ENCODE measurements at regions of chr7 and their contacts with region 1.

Region 1: GRCh38 chr7:21253740-21254687 is 173.9 kb upstream of the SP4 start:
- DNase-seq: peak; percentile 56
- ATAC-seq: peak; percentile 41
- H3K4me3 ChIP-seq: no peak overlapping the region
- H3K4me3 Mint-ChIP-seq: peak overlapping the region; percentile 9
- H3K27ac ChIP-seq: no peak overlapping the region
- H3K27ac Mint-ChIP-seq: no peak overlapping the region
- H3K4me1 ChIP-seq: no peaks in the 10 kb centered on the region
- H3K4me1 Mint-ChIP-seq: peaks cover 5% of the 10 kb centered on the region
- H3K27me3 ChIP-seq: peaks cover 0 to 31% (median 18%) of the 10 kb centered on the region in 4 experiments
- H3K27me3 Mint-ChIP-seq: peaks cover 39% of the 10 kb centered on the region
- CTCF ChIP-seq: peak; percentile 62

Region 2: DNA sequence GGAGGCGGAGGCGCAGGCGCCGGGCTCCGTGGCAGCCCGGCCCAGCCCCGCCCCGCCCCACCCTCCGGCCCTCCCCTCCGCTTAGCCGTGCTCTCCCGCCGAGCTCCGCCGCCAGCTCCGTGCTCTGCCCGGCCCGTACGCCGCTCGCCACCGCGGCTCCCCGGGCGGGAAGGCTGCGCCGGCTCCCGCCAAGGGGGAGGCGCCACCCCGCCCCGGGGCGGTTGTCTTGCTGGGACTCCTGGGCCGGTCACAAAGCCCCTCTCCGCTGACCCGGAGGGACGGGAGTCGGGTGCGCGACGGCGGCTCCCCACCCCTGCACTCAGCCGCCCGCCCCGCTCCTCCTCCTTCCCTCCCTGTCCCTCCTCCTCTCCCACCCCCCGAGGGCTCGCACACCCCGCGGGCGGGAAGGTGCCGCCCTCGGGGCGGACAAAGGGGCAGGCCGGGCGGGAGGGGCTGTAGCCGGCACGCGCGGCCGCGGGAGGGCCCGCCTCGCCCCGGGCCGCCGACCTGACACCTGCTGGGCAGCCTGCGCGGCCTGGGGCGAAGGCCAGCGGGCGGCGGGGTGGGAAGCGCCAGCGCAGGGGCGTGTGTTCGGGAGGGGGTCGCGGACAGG is 455.8 kb before region 1 on chr7:
- CTCF ChIA-PET with region 1: no interaction called
- POLR2A ChIA-PET with region 1: no interaction called
- intact Hi-C with region 1: loop called (anchors 10 kb)
- DNase-seq: no peak
- ATAC-seq: peak; percentile 80
- H3K4me3 ChIP-seq: peak overlapping the region in 4 of 5 experiments; percentile 21 to 72 (median 54)
- H3K4me3 Mint-ChIP-seq: peak overlapping the region; percentile 76
- H3K27ac ChIP-seq: no peak overlapping the region
- H3K27ac Mint-ChIP-seq: no peak overlapping the region
- H3K4me1 ChIP-seq: peaks cover 15 to 23% of the 10 kb centered on the region in 2 donors
- H3K4me1 Mint-ChIP-seq: peaks cover 19% of the 10 kb centered on the region
- H3K27me3 ChIP-seq: peaks cover under 1 to 58% (median 54%) of the 10 kb centered on the region in 4 experiments
- H3K27me3 Mint-ChIP-seq: peaks cover 54% of the 10 kb centered on the region
- CTCF ChIP-seq: no peak

Region 3: GRCh38 chr7:21507626-21508343 is 253.8 kb after region 1 on chr7:
- CTCF ChIA-PET with region 1: interaction called, 25 read pairs
- POLR2A ChIA-PET with region 1: no interaction called
- intact Hi-C with region 1: loop called (anchors 1 kb)
- DNase-seq: peak; percentile 43
- ATAC-seq: no peak
- H3K4me3 ChIP-seq: no peak overlapping the region
- H3K4me3 Mint-ChIP-seq: no peak overlapping the region
- H3K27ac ChIP-seq: no peak overlapping the region
- H3K27ac Mint-ChIP-seq: peak overlapping the region; percentile 29
- H3K4me1 ChIP-seq: no peaks in the 10 kb centered on the region
- H3K4me1 Mint-ChIP-seq: peaks cover 2% of the 10 kb centered on the region
- H3K27me3 ChIP-seq: no peaks in the 10 kb centered on the region
- H3K27me3 Mint-ChIP-seq: no peaks in the 10 kb centered on the region
- CTCF ChIP-seq: peak; percentile 66

Region 4: DNA sequence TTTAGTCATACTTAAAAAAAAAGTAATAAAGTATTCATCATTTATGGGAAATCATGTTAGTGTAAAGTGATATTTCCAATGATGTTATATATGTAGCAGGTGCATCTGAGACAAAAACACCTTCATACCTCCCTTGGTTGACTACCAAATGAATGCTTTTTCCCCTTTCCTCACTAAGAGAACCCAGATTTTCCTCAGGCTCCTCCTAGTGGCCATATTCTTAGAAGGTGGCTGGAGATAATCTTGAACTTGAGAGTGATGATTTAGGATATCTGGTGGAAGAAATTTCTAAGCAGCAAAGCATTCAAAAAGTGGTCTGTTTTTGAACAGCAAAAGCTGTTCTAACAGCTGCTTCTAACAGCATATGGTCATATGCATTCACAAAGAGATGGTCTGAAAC is 272.0 kb after region 1 on chr7:
- CTCF ChIA-PET with region 1: interaction called, 9 read pairs
- POLR2A ChIA-PET with region 1: no interaction called
- intact Hi-C with region 1: loop called (anchors 5 kb)
- DNase-seq: peak; percentile 11
- ATAC-seq: no peak
- H3K4me3 ChIP-seq: no peak overlapping the region
- H3K4me3 Mint-ChIP-seq: no peak overlapping the region
- H3K27ac ChIP-seq: no peak overlapping the region
- H3K27ac Mint-ChIP-seq: no peak overlapping the region
- H3K4me1 ChIP-seq: no peaks in the 10 kb centered on the region
- H3K4me1 Mint-ChIP-seq: no peaks in the 10 kb centered on the region
- H3K27me3 ChIP-seq: no peaks in the 10 kb centered on the region
- H3K27me3 Mint-ChIP-seq: no peaks in the 10 kb centered on the region
- CTCF ChIP-seq: peak; percentile 38

Region 5: GRCh38 chr7:21568762-21569161 is 314.7 kb after region 1 on chr7:
- CTCF ChIA-PET with region 1: interaction called, 10 read pairs
- POLR2A ChIA-PET with region 1: no interaction called
- intact Hi-C with region 1: no loop called
- DNase-seq: peak; percentile 18
- ATAC-seq: no peak
- H3K4me3 ChIP-seq: no peak overlapping the region
- H3K4me3 Mint-ChIP-seq: no peak overlapping the region
- H3K27ac ChIP-seq: no peak overlapping the region
- H3K27ac Mint-ChIP-seq: no peak overlapping the region
- H3K4me1 ChIP-seq: no peaks in the 10 kb centered on the region
- H3K4me1 Mint-ChIP-seq: no peaks in the 10 kb centered on the region
- H3K27me3 ChIP-seq: no peaks in the 10 kb centered on the region
- H3K27me3 Mint-ChIP-seq: peaks cover 19% of the 10 kb centered on the region
- CTCF ChIP-seq: peak; percentile 21

Region 6: DNA sequence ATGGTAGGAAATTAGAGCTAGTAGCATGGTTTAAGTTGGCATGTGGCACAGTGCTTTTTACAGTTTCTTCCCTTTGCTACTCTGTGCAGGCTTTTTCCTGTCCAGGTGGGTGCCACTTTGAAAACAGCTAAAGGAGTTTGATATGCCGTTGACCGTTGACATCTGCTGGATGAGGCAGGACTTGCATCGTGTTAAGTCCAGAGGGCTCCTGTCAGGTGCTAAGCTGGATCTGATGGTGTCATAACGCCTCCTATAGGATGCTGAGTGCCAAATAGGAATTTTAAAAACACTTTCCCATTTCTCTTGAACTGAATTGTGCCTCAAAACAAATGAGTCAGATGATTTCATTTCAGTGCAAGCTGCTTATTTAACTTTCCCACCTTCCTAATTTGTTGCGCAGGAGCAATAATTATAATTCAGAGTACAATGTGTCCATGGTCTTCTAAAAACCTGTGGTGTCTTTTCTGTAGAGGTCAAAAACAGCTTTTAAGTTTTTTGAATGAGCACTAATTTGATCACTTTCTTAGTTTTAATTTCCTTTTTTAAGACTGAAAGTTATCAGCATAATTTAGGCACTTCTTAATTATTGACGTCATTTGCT is 513.4 kb after region 1 on chr7:
- CTCF ChIA-PET with region 1: interaction called, 11 read pairs
- POLR2A ChIA-PET with region 1: no interaction called
- intact Hi-C with region 1: no loop called
- DNase-seq: peak; percentile 29
- ATAC-seq: peak; percentile 36
- H3K4me3 ChIP-seq: no peak overlapping the region
- H3K4me3 Mint-ChIP-seq: no peak overlapping the region
- H3K27ac ChIP-seq: no peak overlapping the region
- H3K27ac Mint-ChIP-seq: no peak overlapping the region
- H3K4me1 ChIP-seq: no peaks in the 10 kb centered on the region
- H3K4me1 Mint-ChIP-seq: no peaks in the 10 kb centered on the region
- H3K27me3 ChIP-seq: no peaks in the 10 kb centered on the region
- H3K27me3 Mint-ChIP-seq: peaks cover 20% of the 10 kb centered on the region
- CTCF ChIP-seq: peak; percentile 32